K562 (cell line): ENCODE measurements at regions of chr6 and their contacts with region 1.

Region 1: DNA sequence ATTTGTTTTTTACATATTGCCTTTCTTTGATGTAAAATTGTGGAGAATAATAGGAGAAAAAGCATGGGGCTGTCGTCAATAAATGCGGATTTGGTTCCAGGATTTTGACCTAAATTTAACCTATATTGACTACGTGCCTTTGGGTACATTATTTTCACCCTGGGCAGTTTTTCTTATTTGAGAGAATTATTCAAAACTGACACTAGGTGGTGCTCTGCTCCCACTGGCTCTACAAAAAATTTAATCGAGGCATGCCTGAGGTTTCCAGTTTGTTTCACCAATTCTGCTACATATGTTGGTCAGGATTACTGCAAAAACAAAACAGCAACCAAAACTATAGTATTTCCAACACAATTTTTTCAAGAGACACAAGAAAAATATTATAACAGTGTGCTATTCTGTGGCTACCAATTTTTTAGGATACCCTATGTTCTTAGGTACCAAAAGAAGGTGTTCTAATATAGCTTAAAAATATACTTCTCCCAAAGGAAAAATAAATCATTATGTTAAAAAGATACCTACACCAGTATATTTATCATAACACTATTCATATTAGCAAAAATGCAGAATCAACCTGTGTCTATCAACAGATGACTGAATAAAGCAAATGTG is 48.6 kb upstream of the FABP7 start:
- DNase-seq: peak in 3 of 4 experiments; percentile 31 to 57 (median 32)
- ATAC-seq: peak; percentile 74
- H3K4me3 ChIP-seq: no peak overlapping the region
- H3K27ac ChIP-seq: no peak overlapping the region
- H3K4me1 ChIP-seq: no peaks in the 10 kb centered on the region
- H3K27me3 ChIP-seq: no peaks in the 10 kb centered on the region
- CTCF ChIP-seq: peak; percentile 57 to 82 (median 59)
- EP300 ChIP-seq: no peak
- POLR2A ChIP-seq: no peak
- RAD21 ChIP-seq: peak; percentile 81 to 83

Region 2: DNA sequence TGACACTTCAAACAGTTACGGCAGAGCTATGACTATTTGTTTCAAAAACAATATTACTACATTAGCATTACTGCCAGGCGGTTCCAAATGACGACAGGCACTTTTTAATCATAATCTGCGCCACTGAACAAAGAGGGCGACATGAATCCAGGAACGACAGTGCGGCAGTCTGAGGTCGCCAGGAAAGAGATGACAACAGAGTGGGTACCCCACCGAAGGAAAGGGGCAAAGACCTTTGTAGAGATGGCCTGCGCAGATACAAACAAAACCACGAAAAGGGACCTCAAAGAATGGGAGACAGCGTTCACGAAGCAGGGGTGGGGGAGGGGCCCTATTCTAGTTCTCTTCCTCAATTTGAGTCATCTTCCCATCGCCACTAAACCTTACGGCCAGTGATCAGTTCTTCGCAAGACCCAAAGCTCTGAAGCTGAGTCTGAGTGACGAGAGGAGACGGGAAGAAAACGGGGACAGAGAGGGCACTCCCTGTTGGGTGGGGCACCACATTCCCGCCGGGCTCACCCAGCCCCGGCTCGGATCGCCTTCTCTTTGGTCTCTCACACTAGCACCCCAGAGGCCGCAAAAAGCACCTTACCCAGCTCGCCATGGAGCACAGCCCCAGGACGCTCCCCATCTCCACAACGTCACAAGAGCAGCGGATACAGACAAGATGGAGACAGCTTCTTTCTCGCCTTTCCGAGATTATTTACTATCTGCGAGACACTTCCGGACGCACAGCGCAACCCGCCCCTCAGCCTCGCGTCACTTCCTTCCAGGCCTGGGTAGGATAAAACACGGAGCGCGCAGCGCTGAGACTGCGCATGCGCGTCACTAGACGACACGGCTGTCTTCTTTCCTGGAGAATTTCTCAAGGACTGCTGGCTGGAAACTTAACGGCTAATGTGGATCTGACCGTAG is 259.5 kb before region 1 on chr6 and contains the start of gene SERINC1:
- CTCF ChIA-PET with region 1: no interaction called
- POLR2A ChIA-PET with region 1: no interaction called
- in situ Hi-C with region 1: no loop called
- intact Hi-C with region 1: loop called (anchors 5 kb)
- DNase-seq: peak; percentile 91 to 97 (median 92)
- ATAC-seq: peak; percentile 96
- H3K4me3 ChIP-seq: peak within 1 kb of the TSS; percentile 60
- H3K27ac ChIP-seq: peak within 1 kb of the TSS; percentile 87
- H3K4me1 ChIP-seq: peaks cover 0 to 6% of the 10 kb centered on the region in 2 experiments; a peak in 2 of 5 replicates
- H3K27me3 ChIP-seq: no peaks in the 10 kb centered on the region
- CTCF ChIP-seq: no peak
- EP300 ChIP-seq: no peak
- POLR2A ChIP-seq: peak; percentile 92
- RAD21 ChIP-seq: no peak
- polyA plus RNA-seq, gene SERINC1: 33.2 to 37.3 TPM

Region 3: DNA sequence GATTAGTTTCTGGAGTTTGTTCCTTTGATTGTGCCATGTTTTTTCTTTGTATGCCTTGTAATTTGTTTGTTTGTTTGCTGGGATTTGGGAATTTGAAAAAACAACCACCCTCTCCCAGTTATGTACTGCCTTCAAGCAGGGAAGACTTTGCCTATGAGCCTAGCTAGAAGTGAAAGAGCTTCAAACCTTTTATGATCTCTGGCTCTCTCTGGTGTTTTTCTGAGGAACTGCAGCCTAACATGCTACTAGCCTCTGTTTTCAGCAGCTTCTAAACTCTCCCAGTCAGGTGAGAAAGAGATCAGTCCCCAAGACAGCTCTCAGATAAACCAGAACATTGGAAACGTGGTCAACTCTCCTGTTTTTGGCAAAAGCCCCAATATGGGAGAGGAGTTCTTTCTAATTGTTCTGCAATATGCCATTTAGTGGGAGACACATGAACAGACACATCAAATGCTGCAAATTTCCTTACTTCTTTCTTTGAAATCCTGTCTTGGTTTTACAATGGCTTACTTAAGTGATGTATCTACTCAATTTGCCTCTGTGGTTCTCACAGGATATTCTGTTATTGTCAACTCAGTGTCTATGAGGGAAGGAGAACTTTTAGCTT is 200.3 kb before region 1 on chr6:
- CTCF ChIA-PET with region 1: no interaction called
- POLR2A ChIA-PET with region 1: no interaction called
- in situ Hi-C with region 1: no loop called
- intact Hi-C with region 1: loop called (anchors 2 kb)
- DNase-seq: peak; percentile 51 to 73 (median 56)
- ATAC-seq: peak; percentile 96
- H3K4me3 ChIP-seq: no peak overlapping the region
- H3K27ac ChIP-seq: no peak overlapping the region
- H3K4me1 ChIP-seq: no peaks in the 10 kb centered on the region
- H3K27me3 ChIP-seq: no peaks in the 10 kb centered on the region
- CTCF ChIP-seq: peak; percentile 72 to 86 (median 76)
- EP300 ChIP-seq: no peak
- POLR2A ChIP-seq: no peak
- RAD21 ChIP-seq: peak; percentile 83 to 95

Region 4: GRCh38 chr6:122751326-122751725 is 20.4 kb after region 1 on chr6:
- CTCF ChIA-PET with region 1: no interaction called
- POLR2A ChIA-PET with region 1: no interaction called
- in situ Hi-C with region 1: no loop called
- intact Hi-C with region 1: no loop called
- DNase-seq: no peak
- ATAC-seq: no peak
- H3K4me3 ChIP-seq: no peak overlapping the region
- H3K27ac ChIP-seq: no peak overlapping the region
- H3K4me1 ChIP-seq: no peaks in the 10 kb centered on the region
- H3K27me3 ChIP-seq: no peaks in the 10 kb centered on the region
- CTCF ChIP-seq: no peak
- EP300 ChIP-seq: no peak
- POLR2A ChIP-seq: no peak
- RAD21 ChIP-seq: no peak

Region 5: DNA sequence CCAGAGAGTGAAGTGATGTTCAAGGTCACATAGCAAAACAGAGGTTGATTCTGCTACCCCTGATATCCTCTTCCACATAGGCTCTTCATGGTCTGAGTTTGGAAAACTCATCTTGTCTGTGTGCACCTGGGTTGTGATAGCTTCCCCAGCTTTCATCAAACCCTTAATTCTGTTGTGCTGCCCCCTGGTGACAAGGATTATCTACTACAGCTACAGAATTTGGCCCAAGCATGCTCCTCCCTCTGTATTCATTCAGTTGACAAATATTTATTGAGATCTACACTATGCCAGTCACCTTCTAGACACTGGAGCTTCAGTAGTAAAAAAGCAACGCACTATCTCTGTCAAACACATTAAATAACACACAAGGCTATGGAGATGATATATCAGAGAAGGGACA is 108.6 kb after region 1 on chr6:
- CTCF ChIA-PET with region 1: interaction called, 34 read pairs
- POLR2A ChIA-PET with region 1: interaction called, 3 read pairs
- in situ Hi-C with region 1: no loop called
- intact Hi-C with region 1: loop called (anchors 1 kb)
- DNase-seq: peak; percentile 66 to 72 (median 70)
- ATAC-seq: peak; percentile 90
- H3K4me3 ChIP-seq: no peak overlapping the region
- H3K27ac ChIP-seq: no peak overlapping the region
- H3K4me1 ChIP-seq: no peaks in the 10 kb centered on the region
- H3K27me3 ChIP-seq: peaks cover 4 to 9% of the 10 kb centered on the region in 2 experiments; a peak in 3 of 5 replicates
- CTCF ChIP-seq: peak; percentile 61 to 76 (median 61)
- EP300 ChIP-seq: no peak
- POLR2A ChIP-seq: no peak
- RAD21 ChIP-seq: peak; percentile 44 to 67

Region 6: DNA sequence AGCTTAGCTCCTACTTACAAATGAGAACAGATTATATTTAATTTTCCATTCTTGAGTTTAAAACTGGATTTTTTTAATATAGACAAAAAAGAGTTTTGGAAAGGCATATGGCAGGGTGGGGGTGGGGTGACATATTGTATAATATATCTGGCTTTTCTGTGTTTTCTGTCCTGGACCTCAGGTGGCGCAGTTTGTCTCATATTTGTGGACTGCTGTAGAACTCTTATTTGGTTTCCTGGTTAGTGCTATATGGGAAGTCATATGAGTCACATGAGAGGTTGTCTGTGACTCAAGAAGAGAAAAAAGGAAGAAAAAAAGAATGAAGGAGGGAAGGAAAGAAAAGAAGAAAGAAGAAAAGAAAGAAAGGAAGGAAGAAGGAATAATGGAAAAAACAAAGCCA is 396.9 kb after region 1 on chr6:
- CTCF ChIA-PET with region 1: no interaction called
- POLR2A ChIA-PET with region 1: no interaction called
- in situ Hi-C with region 1: no loop called
- intact Hi-C with region 1: no loop called
- DNase-seq: peak in 1 of 4 experiments; percentile 6
- ATAC-seq: no peak
- H3K4me3 ChIP-seq: no peak overlapping the region
- H3K27ac ChIP-seq: no peak overlapping the region
- H3K4me1 ChIP-seq: no peaks in the 10 kb centered on the region
- H3K27me3 ChIP-seq: no peaks in the 10 kb centered on the region
- CTCF ChIP-seq: no peak
- EP300 ChIP-seq: no peak
- POLR2A ChIP-seq: no peak
- RAD21 ChIP-seq: no peak

Region 7: GRCh38 chr6:123380257-123380656 is 649.4 kb after region 1 on chr6:
- CTCF ChIA-PET with region 1: no interaction called
- POLR2A ChIA-PET with region 1: no interaction called
- in situ Hi-C with region 1: no loop called
- intact Hi-C with region 1: loop called (anchors 5 kb)
- DNase-seq: peak in 3 of 4 experiments; percentile 7 to 60 (median 9)
- ATAC-seq: peak; percentile 97
- H3K4me3 ChIP-seq: no peak overlapping the region
- H3K27ac ChIP-seq: no peak overlapping the region
- H3K4me1 ChIP-seq: no peaks in the 10 kb centered on the region
- H3K27me3 ChIP-seq: no peaks in the 10 kb centered on the region
- CTCF ChIP-seq: peak in 2 of 3 experiments; percentile 44; a peak in 3 of 6 replicates
- EP300 ChIP-seq: no peak
- POLR2A ChIP-seq: no peak
- RAD21 ChIP-seq: peak; percentile 36 to 82; a peak in 2 of 4 replicates